ENCODE measurements at regions of chr4 and their contacts with region 1.

Region 1: GRCh38 chr4:108570993-108571569 is 49.3 kb upstream of the RPL34 start:
- DNase-seq: peak; percentile 32
- ATAC-seq: peak; percentile 78
- H3K4me3 ChIP-seq: no peak overlapping the region
- H3K27ac ChIP-seq: no peak overlapping the region
- H3K4me1 ChIP-seq: no peaks in the 10 kb centered on the region
- H3K27me3 ChIP-seq: peaks cover 10% of the 10 kb centered on the region
- CTCF ChIP-seq: no peak
- POLR2A ChIP-seq: no peak
- RAD21 ChIP-seq: no peak

Region 2: DNA sequence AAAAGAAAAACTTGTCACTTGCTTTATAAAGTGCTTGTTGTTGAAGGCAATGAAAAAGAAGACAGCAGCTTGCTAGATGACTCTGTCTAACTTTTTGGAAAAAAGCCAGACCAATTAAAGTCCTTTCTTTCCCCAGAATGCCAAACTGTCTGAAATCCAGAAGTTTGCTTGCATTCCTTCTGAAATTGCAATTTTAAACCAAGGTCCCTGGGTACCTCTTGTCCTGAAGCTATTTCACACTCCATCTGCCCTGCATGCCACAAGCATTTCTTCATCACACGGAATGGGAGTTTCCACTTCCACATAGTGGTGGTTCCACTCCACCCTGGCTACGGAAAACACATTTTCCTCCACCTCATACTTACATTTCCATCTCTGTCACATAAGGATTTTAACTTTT is 952.0 kb before region 1 on chr4:
- CTCF ChIA-PET with region 1: no interaction called
- POLR2A ChIA-PET with region 1: no interaction called
- dilution Hi-C with region 1: no loop called
- in situ Hi-C with region 1: no loop called
- intact Hi-C with region 1: no loop called
- DNase-seq: peak; percentile 76
- ATAC-seq: peak; percentile 89
- H3K4me3 ChIP-seq: no peak overlapping the region
- H3K27ac ChIP-seq: no peak overlapping the region
- H3K4me1 ChIP-seq: peaks cover 8% of the 10 kb centered on the region; the same call in 1 of the 2 replicates
- H3K27me3 ChIP-seq: no peaks in the 10 kb centered on the region
- CTCF ChIP-seq: no peak
- POLR2A ChIP-seq: no peak
- RAD21 ChIP-seq: no peak

Region 3: DNA sequence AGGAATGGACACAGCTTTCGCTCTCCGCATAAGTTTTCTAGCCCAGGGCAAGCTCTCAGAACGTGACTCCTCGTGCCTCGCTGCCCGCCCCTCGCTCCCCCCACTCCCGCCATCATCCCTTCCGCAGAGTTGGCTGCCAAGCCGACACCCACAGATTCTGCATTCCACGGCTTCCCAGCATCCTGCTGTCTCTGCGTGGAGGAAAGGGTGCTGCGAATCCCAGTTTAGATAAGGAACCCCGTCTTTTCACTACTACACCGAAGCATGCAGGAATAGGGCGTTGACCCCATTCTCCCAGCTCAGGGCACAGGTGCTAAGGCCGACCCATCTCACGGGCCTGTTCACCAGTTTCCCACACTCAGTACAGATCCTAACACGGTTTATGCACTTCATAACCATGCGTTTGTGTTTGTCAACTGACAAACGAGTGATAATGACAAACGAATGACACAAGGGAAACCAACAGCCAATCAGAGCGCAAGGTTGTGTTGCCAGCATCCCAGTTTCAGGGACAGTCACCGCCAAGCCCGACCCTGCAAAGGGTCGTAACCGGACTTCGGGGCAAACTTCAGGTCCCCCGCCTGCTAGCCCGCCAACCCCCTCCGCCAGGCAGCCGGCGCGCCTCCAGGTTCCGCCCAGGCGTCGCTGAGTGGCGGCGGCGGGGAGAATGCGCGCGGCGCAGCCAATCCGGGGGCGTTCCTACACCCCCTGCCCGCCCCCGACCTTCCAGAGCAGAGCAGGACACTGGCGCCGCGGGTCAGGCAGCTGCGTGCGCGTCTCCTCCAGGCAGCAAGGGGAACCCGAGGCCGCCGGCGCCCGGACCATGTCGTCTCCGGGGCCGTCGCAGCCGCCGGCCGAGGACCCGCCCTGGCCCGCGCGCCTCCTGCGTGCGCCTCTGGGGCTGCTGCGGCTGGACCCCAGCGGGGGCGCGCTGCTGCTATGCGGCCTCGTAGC is 640.0 kb before region 1 on chr4 and contains the start of gene CYP2U1:
- CTCF ChIA-PET with region 1: no interaction called
- POLR2A ChIA-PET with region 1: no interaction called
- dilution Hi-C with region 1: no loop called
- in situ Hi-C with region 1: no loop called
- intact Hi-C with region 1: loop called (anchors 10 kb)
- DNase-seq: peak; percentile 67
- ATAC-seq: peak; percentile 98
- H3K4me3 ChIP-seq: peak within 1 kb of the TSS; percentile 59
- H3K27ac ChIP-seq: peak within 1 kb of the TSS; percentile 17; the same call in 1 of the 2 replicates
- H3K4me1 ChIP-seq: peaks cover 4% of the 10 kb centered on the region
- H3K27me3 ChIP-seq: no peaks in the 10 kb centered on the region
- CTCF ChIP-seq: 0 out of 2 replicates have a peak, but pooled peaks have one; percentile 8
- POLR2A ChIP-seq: no peak
- RAD21 ChIP-seq: no peak
- total RNA-seq, gene CYP2U1: 11.1 and 13.6 TPM in 2 replicates

Region 4: GRCh38 chr4:108018040-108018883 is 552.8 kb before region 1 on chr4:
- CTCF ChIA-PET with region 1: interaction called, 16 read pairs
- POLR2A ChIA-PET with region 1: no interaction called
- dilution Hi-C with region 1: no loop called
- in situ Hi-C with region 1: loop called (anchors 5 kb)
- intact Hi-C with region 1: loop called (anchors 1 kb)
- DNase-seq: peak; percentile 77
- ATAC-seq: peak; percentile 93
- H3K4me3 ChIP-seq: no peak overlapping the region
- H3K27ac ChIP-seq: no peak overlapping the region
- H3K4me1 ChIP-seq: no peaks in the 10 kb centered on the region
- H3K27me3 ChIP-seq: no peaks in the 10 kb centered on the region
- CTCF ChIP-seq: peak; percentile 84
- POLR2A ChIP-seq: no peak
- RAD21 ChIP-seq: peak; percentile 87

Region 5: GRCh38 chr4:108030332-108030731 is 540.7 kb before region 1 on chr4:
- CTCF ChIA-PET with region 1: interaction called, 14 read pairs
- POLR2A ChIA-PET with region 1: no interaction called
- dilution Hi-C with region 1: no loop called
- in situ Hi-C with region 1: no loop called
- intact Hi-C with region 1: loop called (anchors 1 kb)
- DNase-seq: peak; percentile 76
- ATAC-seq: peak; percentile 95
- H3K4me3 ChIP-seq: no peak overlapping the region
- H3K27ac ChIP-seq: no peak overlapping the region
- H3K4me1 ChIP-seq: peaks cover 3% of the 10 kb centered on the region; the same call in 1 of the 2 replicates
- H3K27me3 ChIP-seq: no peaks in the 10 kb centered on the region
- CTCF ChIP-seq: peak; percentile 71
- POLR2A ChIP-seq: no peak
- RAD21 ChIP-seq: peak; percentile 76

Region 6: DNA sequence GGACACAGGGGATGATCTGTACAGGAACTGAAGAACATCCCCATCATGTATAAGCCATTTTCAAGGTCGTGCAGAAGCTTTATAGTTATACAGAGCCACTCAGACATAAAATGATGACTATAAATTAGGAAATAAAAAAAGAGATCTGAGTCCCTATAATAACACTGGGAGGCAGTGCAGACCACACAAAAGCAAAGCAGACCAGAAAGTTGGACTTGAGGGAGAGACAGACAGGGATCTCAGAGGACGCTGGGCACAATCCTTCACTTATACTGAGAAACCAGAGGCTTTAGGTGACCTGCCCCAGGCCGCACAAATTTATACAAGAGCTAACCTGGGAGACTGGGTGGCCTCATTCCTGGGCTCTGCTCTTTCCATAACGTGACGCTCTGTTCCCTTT is 510.9 kb before region 1 on chr4:
- CTCF ChIA-PET with region 1: interaction called, 11 read pairs
- POLR2A ChIA-PET with region 1: no interaction called
- dilution Hi-C with region 1: no loop called
- in situ Hi-C with region 1: no loop called
- intact Hi-C with region 1: loop called (anchors 1 kb)
- DNase-seq: peak; percentile 46
- ATAC-seq: peak; percentile 70
- H3K4me3 ChIP-seq: no peak overlapping the region
- H3K27ac ChIP-seq: no peak overlapping the region
- H3K4me1 ChIP-seq: peaks cover 3% of the 10 kb centered on the region
- H3K27me3 ChIP-seq: no peaks in the 10 kb centered on the region; the same call in 1 of the 2 replicates
- CTCF ChIP-seq: peak; percentile 50
- POLR2A ChIP-seq: no peak
- RAD21 ChIP-seq: peak; percentile 50

Region 7: GRCh38 chr4:108168671-108169523 is 402.2 kb before region 1 on chr4 and contains the start of gene LEF1:
- CTCF ChIA-PET with region 1: no interaction called
- POLR2A ChIA-PET with region 1: no interaction called
- dilution Hi-C with region 1: no loop called
- in situ Hi-C with region 1: no loop called
- intact Hi-C with region 1: loop called (anchors 5 kb)
- DNase-seq: peak; percentile 11
- ATAC-seq: peak; percentile 48
- H3K4me3 ChIP-seq: peak within 1 kb of the TSS; percentile 53
- H3K27ac ChIP-seq: no peak within 1 kb of the TSS
- H3K4me1 ChIP-seq: peaks cover 2% of the 10 kb centered on the region; the same call in 1 of the 2 replicates
- H3K27me3 ChIP-seq: peaks cover 84% of the 10 kb centered on the region
- CTCF ChIP-seq: no peak
- POLR2A ChIP-seq: no peak
- RAD21 ChIP-seq: no peak
- total RNA-seq, gene LEF1: 0.56 and 1.8 TPM in 2 replicates

Region 8: GRCh38 chr4:109184491-109184961 is 613.4 kb after region 1 on chr4:
- CTCF ChIA-PET with region 1: no interaction called
- POLR2A ChIA-PET with region 1: no interaction called
- dilution Hi-C with region 1: no loop called
- in situ Hi-C with region 1: no loop called
- intact Hi-C with region 1: no loop called
- DNase-seq: no peak
- ATAC-seq: no peak
- H3K4me3 ChIP-seq: no peak overlapping the region
- H3K27ac ChIP-seq: no peak overlapping the region
- H3K4me1 ChIP-seq: no peaks in the 10 kb centered on the region
- H3K27me3 ChIP-seq: no peaks in the 10 kb centered on the region; the same call in 1 of the 2 replicates
- CTCF ChIP-seq: no peak
- POLR2A ChIP-seq: no peak
- RAD21 ChIP-seq: no peak